A673 (cell line): ENCODE measurements at regions of chr17 and their contacts with region 1.

Region 1: DNA sequence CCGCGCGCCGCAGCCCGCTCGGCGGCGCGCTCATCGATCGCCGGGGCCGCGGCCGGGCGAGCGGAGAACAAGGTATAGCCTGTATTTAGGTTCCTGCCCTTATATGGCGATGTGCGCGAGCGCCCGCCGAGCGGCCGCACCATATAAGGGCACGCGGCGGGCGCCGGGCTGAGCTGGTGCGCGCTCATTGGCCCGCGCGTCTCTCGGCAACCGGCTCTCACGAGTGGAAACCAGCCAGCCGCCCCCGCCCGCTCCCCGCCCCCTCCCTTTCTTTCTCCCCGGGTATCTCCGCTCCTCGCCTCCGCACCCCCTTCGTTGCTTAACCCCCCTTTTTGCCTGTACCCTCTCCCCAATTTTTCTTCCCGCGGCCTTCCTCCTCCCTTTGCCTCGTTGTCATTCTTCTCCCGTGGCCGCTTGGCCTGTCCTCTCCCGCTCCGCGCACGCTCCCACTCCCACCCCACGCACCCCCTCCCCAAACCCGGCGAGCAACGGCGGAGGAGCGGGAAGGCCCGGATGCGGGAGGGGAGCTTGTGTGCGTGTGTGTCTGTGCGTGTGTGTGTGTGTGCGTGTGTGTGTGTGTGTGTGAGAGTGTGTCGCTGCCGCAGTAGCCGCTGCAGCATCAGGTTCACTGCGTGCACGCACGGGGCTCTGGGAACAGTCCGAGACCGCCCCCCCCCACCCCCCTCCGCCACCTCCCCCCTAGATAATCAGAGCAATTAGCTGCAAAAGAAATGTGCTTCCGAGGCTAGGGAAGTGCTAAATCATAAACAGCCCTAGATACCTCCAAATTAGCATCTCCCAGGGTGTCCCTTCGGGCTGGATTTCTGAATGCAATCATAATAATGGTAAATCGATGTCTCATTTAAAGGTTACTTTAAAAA is 13.5 kb upstream of the CBX8 start:
- DNase-seq: peak; percentile 95
- H3K4me3 ChIP-seq: peak overlapping the region; percentile 49
- H3K27ac ChIP-seq: peak overlapping the region; percentile 96
- H3K4me1 ChIP-seq: peaks cover 28% of the 10 kb centered on the region
- H3K27me3 ChIP-seq: no peaks in the 10 kb centered on the region
- CTCF ChIP-seq: no peak

Region 2: DNA sequence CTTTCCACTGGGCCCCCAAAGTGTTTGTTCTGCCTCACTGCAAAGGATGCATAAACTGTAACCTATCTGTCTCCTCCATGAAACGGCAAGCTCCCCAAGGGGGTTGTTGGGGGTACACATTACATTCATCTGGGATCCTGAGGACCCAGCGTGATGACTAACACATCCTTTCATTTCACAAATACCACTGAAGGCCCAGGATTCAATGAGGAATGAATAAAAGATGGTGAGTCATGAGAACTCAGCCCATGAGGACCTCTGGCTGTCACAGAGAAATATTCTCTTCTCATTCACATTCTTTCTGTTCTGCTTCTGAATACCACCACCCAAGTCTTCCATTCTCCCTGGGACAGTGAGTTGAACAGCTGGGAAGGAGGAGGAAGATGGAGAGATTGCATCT is 349.3 kb before region 1 on chr17:
- CTCF ChIA-PET with region 1: no interaction called
- POLR2A ChIA-PET with region 1: no interaction called
- intact Hi-C with region 1: no loop called
- DNase-seq: peak; percentile 31
- H3K4me3 ChIP-seq: no peak overlapping the region
- H3K27ac ChIP-seq: no peak overlapping the region
- H3K4me1 ChIP-seq: no peaks in the 10 kb centered on the region
- H3K27me3 ChIP-seq: peaks cover 20% of the 10 kb centered on the region
- CTCF ChIP-seq: no peak

Region 3: DNA sequence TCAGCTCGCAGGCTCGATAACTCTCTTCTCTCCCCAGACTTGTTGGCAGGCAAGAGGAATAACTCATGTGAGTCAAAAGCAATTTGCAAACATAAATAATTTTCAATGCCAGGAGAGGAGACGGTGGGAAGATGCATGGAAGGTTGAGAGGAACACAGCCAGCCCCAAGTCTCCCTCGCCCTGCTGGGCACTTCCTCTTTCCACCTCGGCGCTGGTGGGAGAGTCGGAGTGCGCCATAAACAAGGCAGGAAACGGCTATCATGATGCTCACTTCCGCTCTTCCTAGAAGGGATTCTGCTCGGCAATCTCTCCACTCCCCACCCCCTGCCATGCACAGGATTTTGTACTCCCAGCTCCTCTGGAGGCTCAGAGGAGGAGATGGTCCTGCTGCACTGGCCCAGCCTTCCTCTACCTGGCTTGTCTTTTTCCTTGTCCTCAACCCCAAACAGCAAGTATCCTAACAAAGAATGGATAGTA is 15.9 kb after region 1 on chr17:
- CTCF ChIA-PET with region 1: interaction called, 5 read pairs
- POLR2A ChIA-PET with region 1: interaction called, 4 read pairs
- intact Hi-C with region 1: loop called (anchors 2 kb)
- DNase-seq: peak; percentile 96
- H3K4me3 ChIP-seq: peak overlapping the region; percentile 15
- H3K27ac ChIP-seq: peak overlapping the region; percentile 74
- H3K4me1 ChIP-seq: peaks cover 61% of the 10 kb centered on the region
- H3K27me3 ChIP-seq: no peaks in the 10 kb centered on the region
- CTCF ChIP-seq: no peak